CD8-positive, alpha-beta memory T cell (primary cell): ENCODE measurements at regions of chr15 and their contacts with region 1.

Region 1: GRCh38 chr15:94324117-94324826 is 92.9 kb downstream of the MCTP2 start:
- DNase-seq: peak; percentile 36 to 67 (median 43)
- H3K4me3 ChIP-seq: no peak overlapping the region
- H3K4me3 Mint-ChIP-seq: peak overlapping the region in 2 of 7 donors; percentile 48
- H3K27ac ChIP-seq: no peak overlapping the region
- H3K27ac Mint-ChIP-seq: peak overlapping the region in 7 of 8 donors; percentile 13 to 87 (median 80)
- H3K4me1 ChIP-seq: no peaks in the 10 kb centered on the region
- H3K4me1 Mint-ChIP-seq: peaks cover 17 to 32% (median 25%) of the 10 kb centered on the region in 3 donors
- H3K27me3 ChIP-seq: no peaks in the 10 kb centered on the region
- H3K27me3 Mint-ChIP-seq: peaks cover 0 to 2% of the 10 kb centered on the region in 2 donors

Region 2: DNA sequence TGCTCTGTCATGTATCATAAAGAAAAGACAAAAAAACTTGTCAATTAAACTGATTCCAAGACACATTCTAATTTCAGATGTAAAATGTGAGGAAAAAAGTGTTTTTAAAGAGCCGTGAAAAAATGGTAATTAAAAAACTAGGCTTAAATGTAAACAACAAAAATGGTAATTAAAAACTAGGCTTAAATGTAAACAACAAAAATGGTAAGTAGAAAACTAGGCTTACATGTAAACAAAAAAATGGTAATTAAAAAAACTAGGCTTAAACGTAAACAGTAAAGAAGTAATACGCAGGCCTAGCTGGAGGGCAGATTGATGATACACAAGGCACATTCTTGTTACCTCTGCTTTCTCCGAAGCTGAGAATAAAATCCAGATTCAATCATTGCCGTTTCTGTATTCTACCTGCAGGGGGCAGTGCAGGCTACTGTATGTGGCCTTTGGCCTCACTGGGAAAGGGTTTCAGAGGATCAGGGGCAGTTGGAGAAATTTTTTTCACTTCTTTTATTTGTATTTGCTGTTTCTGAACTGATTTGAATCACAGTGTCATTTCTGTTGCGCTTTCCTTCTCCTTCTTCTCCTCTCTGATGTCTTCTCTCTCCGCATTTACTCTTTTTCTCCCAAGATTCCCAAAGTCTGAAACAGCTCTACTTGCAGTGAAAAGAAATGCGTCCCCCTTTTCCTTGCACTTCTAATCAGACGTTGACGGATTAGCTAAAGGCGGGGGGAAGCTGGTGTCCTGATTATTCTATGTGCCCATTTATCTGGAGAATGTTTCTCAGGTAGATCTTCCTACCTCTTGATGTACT is 160.1 kb before region 1 on chr15:
- CTCF ChIA-PET with region 1: interaction called, 182 read pairs
- POLR2A ChIA-PET with region 1: no interaction called
- DNase-seq: peak; percentile 27 to 62 (median 34)
- H3K4me3 ChIP-seq: no peak overlapping the region
- H3K4me3 Mint-ChIP-seq: no peak overlapping the region
- H3K27ac ChIP-seq: no peak overlapping the region
- H3K27ac Mint-ChIP-seq: peak overlapping the region in 2 of 8 donors; percentile 1 to 59
- H3K4me1 ChIP-seq: no peaks in the 10 kb centered on the region
- H3K4me1 Mint-ChIP-seq: no peaks in the 10 kb centered on the region
- H3K27me3 ChIP-seq: no peaks in the 10 kb centered on the region
- H3K27me3 Mint-ChIP-seq: peaks cover 0 to 15% of the 10 kb centered on the region in 2 donors

Region 3: GRCh38 chr15:94230956-94231722 is 93.1 kb before region 1 on chr15 and contains the start of gene MCTP2:
- CTCF ChIA-PET with region 1: interaction called, 50 read pairs
- POLR2A ChIA-PET with region 1: interaction called, 4 read pairs
- DNase-seq: peak; percentile 78 to 91 (median 84)
- H3K4me3 ChIP-seq: peak within 1 kb of the TSS; percentile 94
- H3K4me3 Mint-ChIP-seq: peak within 1 kb of the TSS; percentile 92 to 99 (median 96)
- H3K27ac ChIP-seq: peak within 1 kb of the TSS; percentile 85
- H3K27ac Mint-ChIP-seq: peak within 1 kb of the TSS; percentile 85 to 99 (median 98)
- H3K4me1 ChIP-seq: peaks cover 32% of the 10 kb centered on the region
- H3K4me1 Mint-ChIP-seq: peaks cover 60 to 75% (median 71%) of the 10 kb centered on the region in 3 donors
- H3K27me3 ChIP-seq: no peaks in the 10 kb centered on the region
- H3K27me3 Mint-ChIP-seq: no peaks in the 10 kb centered on the region
- total RNA-seq, gene MCTP2: 16.5 to 17.0 TPM

Region 4: DNA sequence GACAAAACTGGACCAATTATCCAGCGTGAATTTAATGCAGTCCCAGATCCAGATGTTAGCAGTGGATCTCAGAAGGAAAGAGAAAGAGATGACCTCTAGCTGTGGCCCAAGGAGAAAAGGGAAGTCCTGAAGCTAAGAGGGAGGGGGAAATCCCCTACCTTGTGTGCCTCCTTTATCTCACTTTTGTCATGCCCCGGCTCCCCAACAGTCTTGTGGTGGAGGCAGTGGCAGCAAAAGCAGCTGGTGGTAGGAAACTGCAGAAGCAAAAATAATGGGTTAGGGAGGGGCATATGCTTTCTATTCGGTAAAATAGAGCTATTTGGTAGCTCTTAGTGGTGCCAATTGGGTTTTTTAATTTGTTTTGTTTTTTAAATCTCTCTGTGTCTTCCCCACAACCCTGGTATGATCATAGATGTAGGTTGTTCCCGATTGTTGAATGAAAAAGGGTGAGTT is 36.5 kb before region 1 on chr15:
- CTCF ChIA-PET with region 1: interaction called, 11 read pairs
- POLR2A ChIA-PET with region 1: no interaction called
- DNase-seq: peak; percentile 4 to 63 (median 36)
- H3K4me3 ChIP-seq: no peak overlapping the region
- H3K4me3 Mint-ChIP-seq: peak overlapping the region in 5 of 7 donors; percentile 57 to 75 (median 72)
- H3K27ac ChIP-seq: no peak overlapping the region
- H3K27ac Mint-ChIP-seq: peak overlapping the region; percentile 12 to 95 (median 86)
- H3K4me1 ChIP-seq: peaks cover 13% of the 10 kb centered on the region
- H3K4me1 Mint-ChIP-seq: peaks cover 44% of the 10 kb centered on the region in 3 donors
- H3K27me3 ChIP-seq: no peaks in the 10 kb centered on the region
- H3K27me3 Mint-ChIP-seq: no peaks in the 10 kb centered on the region

Region 5: DNA sequence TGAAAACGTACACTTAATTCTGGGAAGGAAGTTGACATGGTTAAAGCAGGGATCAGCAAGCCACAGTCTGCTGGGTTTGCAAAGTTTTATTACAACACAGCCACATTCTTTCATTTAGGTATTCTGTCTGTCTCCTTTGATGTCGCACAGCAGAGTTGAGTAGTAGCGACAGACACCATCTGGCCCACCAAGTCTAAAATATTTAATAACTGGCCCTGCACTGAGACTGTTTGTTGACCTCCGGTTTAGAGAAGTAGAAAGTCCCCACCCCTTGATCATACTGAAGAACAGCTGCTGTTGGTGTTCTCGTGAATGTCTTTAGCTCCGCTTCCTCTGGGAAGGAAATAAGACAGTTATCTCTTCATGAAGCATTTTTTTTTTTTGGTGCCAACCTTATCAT is 26.7 kb before region 1 on chr15:
- CTCF ChIA-PET with region 1: interaction called, 11 read pairs
- POLR2A ChIA-PET with region 1: no interaction called
- DNase-seq: no peak
- H3K4me3 ChIP-seq: no peak overlapping the region
- H3K4me3 Mint-ChIP-seq: peak overlapping the region in 1 of 7 donors; percentile 1
- H3K27ac ChIP-seq: no peak overlapping the region
- H3K27ac Mint-ChIP-seq: peak overlapping the region in 5 of 8 donors; percentile 31 to 72 (median 61)
- H3K4me1 ChIP-seq: peaks cover 6% of the 10 kb centered on the region
- H3K4me1 Mint-ChIP-seq: peaks cover 43 to 70% (median 54%) of the 10 kb centered on the region in 3 donors
- H3K27me3 ChIP-seq: no peaks in the 10 kb centered on the region
- H3K27me3 Mint-ChIP-seq: no peaks in the 10 kb centered on the region

Region 6: DNA sequence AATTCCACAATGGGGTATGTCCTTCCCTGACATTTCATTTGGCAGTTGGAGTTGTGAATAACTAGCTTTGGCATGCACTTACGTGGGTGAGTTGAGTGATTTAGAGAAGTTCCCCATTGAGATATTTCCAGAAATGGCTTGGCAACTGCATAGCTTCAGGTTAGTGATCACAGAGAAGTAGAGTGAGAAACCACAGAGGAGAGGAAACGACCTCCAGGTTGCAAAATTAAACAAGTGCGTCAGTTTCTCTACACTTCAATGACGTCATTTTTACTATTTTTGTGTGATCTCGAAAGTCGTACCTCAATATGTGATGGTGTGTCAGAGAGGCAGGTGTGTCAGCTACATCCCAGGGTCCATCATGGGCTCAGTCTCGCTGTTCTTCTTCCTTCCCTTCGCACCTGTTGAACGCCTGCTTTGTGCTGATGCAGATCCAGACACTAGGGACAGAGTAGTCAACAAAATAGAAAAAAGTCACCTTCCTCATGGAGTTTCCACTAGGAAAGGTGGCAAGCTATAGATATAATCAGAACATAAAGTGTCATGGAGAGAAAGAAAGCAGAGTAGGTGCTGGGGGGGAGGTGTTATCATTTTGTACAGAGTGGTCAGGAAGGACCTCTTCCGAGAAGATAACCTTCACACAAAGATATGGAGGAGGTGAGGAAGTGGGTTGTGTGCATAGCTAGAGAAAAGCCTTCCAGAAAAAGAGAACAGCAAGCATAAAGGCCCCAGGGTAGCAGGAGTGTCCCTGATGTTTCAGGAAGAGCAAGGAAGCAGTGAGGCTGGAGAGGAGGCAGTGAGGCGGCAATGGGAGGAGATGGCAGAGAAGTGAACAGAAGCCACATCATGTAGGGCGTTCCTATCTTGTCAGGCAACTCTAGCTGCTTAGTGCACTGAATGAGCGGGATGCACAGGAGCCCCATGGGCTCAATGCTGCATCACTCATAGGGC is 17.3 kb before region 1 on chr15:
- CTCF ChIA-PET with region 1: interaction called, 14 read pairs
- POLR2A ChIA-PET with region 1: interaction called, 3 read pairs
- DNase-seq: peak in 3 of 5 donors; percentile 7 to 73 (median 53)
- H3K4me3 ChIP-seq: no peak overlapping the region
- H3K4me3 Mint-ChIP-seq: peak overlapping the region; percentile 22 to 82 (median 56)
- H3K27ac ChIP-seq: no peak overlapping the region
- H3K27ac Mint-ChIP-seq: peak overlapping the region; percentile 49 to 95 (median 89)
- H3K4me1 ChIP-seq: peaks cover 34% of the 10 kb centered on the region
- H3K4me1 Mint-ChIP-seq: peaks cover 39 to 56% (median 49%) of the 10 kb centered on the region in 3 donors
- H3K27me3 ChIP-seq: no peaks in the 10 kb centered on the region
- H3K27me3 Mint-ChIP-seq: no peaks in the 10 kb centered on the region

Region 7: DNA sequence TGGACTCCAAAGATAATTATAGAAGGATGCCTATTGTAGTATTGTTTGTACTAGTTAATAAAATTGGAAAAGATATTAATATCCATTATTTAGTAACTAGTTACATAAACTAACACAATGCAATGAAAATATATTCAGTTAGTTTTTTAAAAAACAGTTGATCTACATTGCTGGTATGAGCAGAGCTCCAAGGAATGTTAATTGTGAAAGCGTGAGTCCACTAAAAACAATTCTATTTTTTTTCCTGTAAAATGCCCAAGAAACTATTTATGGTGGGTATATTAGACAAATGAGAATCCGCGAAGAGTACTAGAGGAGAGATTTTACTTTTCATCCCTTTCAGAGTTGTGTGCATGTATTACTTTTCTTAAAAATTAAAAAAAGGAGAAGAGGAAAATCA is 11.3 kb after region 1 on chr15:
- CTCF ChIA-PET with region 1: interaction called, 15 read pairs
- POLR2A ChIA-PET with region 1: no interaction called
- DNase-seq: no peak
- H3K4me3 ChIP-seq: no peak overlapping the region
- H3K4me3 Mint-ChIP-seq: no peak overlapping the region
- H3K27ac ChIP-seq: no peak overlapping the region
- H3K27ac Mint-ChIP-seq: no peak overlapping the region
- H3K4me1 ChIP-seq: no peaks in the 10 kb centered on the region
- H3K4me1 Mint-ChIP-seq: peaks cover 0 to 2% (median 0%) of the 10 kb centered on the region in 3 donors
- H3K27me3 ChIP-seq: no peaks in the 10 kb centered on the region
- H3K27me3 Mint-ChIP-seq: no peaks in the 10 kb centered on the region